Activated naive CD4-positive, alpha-beta T cell treated with anti-CD3 and anti-CD28 coated beads for 36 hours (primary cell): ENCODE measurements at regions of chr7 and their contacts with region 1.

Region 1: DNA sequence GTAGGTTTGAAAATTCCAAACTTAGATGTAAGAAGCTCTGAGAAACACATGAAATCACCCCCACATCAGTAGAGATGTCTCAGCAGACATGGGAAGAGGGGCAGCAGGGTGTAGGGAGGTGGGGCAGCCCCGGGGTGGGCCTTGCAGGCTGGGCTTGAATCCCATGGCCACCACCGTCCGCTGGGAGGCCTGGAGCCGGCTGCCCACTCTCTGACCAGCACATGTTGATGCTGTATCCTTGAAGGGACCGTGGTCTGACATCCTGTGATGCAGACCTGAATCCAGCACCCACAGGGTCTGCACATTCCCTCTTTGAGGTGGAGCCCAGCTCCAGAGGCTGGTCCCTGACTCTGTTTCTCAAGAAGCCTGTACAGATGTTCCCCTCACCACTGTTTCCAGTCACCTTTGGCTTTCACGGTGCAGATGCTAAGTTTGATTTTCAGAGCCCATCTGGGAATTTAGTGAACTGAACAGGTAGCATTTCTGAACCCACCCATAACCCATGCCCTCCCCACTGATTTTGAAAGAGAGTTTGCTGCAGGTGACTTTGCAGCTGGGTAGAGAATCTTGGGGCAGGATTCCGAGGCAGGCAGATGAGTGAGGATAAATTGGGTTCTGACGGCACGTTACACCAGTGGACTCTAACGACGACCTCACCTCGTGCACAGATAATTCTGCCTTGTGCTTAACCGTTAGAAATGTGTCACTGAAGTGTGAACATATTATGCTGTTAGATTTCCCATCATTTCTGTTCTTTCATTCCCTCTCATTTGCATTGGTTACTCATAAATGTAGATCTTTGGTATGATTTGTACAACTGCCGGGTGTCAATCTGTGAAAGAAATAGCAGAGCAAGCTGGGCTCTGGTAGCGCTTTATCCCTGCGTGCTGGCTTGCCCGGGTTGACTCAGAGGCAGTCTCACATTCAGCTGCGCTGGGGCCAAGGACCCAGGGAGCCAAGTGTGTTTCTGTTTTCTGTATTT is 45.7 kb downstream of the IKZF1 start:
- DNase-seq: peak; percentile 95
- H3K4me3 Mint-ChIP-seq: peak overlapping the region; percentile 33
- H3K27ac Mint-ChIP-seq: peak overlapping the region; percentile 95
- H3K4me1 Mint-ChIP-seq: peaks cover 97% of the 10 kb centered on the region
- H3K27me3 Mint-ChIP-seq: no peaks in the 10 kb centered on the region

Region 2: GRCh38 chr7:50147951-50148808 is 202.1 kb before region 1 on chr7:
- CTCF ChIA-PET with region 1: interaction called, 3 read pairs
- intact Hi-C with region 1: loop called (anchors 1 kb)
- DNase-seq: peak; percentile 73
- H3K4me3 Mint-ChIP-seq: peak overlapping the region; percentile 34
- H3K27ac Mint-ChIP-seq: peak overlapping the region; percentile 91
- H3K4me1 Mint-ChIP-seq: peaks cover 91% of the 10 kb centered on the region
- H3K27me3 Mint-ChIP-seq: no peaks in the 10 kb centered on the region

Region 3: GRCh38 chr7:50227726-50228125 is 122.5 kb before region 1 on chr7:
- CTCF ChIA-PET with region 1: interaction called, 5 read pairs
- intact Hi-C with region 1: loop called (anchors 1 kb)
- DNase-seq: no peak
- H3K4me3 Mint-ChIP-seq: peak overlapping the region; percentile 64
- H3K27ac Mint-ChIP-seq: peak overlapping the region; percentile 81
- H3K4me1 Mint-ChIP-seq: peaks cover 37% of the 10 kb centered on the region
- H3K27me3 Mint-ChIP-seq: no peaks in the 10 kb centered on the region

Region 4: DNA sequence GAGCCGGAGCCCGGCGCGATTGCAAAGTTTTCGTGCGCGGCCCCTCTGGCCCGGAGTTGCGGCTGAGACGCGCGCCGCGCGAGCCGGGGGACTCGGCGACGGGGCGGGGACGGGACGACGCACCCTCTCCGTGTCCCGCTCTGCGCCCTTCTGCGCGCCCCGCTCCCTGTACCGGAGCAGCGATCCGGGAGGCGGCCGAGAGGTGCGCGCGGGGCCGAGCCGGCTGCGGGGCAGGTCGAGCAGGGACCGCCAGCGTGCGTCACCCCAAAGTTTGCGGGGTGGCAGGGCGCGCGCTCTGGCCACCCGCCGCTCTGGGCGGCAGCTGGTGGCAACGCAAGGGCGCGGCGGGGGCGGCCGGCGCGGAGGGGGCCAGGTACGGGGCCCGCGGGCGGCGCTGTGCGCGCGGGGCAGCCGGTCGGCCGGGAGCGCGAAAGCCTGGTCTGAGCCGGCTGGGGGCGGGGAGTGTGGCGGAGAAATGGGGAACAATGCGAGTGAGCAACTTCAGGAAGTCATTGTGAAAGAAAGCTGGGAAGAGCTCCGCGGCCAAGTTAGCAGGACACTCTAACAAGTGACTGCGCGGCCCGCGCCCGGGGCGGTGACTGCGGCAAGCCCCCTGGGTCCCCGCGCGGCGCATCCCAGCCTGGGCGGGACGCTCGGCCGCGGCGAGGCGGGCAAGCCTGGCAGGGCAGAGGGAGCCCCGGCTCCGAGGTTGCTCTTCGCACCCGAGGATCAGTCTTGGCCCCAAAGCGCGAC is 45.9 kb before region 1 on chr7 and contains the start of gene IKZF1:
- CTCF ChIA-PET with region 1: interaction called, 21 read pairs
- intact Hi-C with region 1: loop called (anchors 1 kb)
- DNase-seq: peak; percentile 74
- H3K4me3 Mint-ChIP-seq: peak within 1 kb of the TSS; percentile 95
- H3K27ac Mint-ChIP-seq: peak within 1 kb of the TSS; percentile 99
- H3K4me1 Mint-ChIP-seq: peaks cover 34% of the 10 kb centered on the region
- H3K27me3 Mint-ChIP-seq: no peaks in the 10 kb centered on the region
- total RNA-seq, gene IKZF1: 213 to 226 TPM

Region 5: GRCh38 chr7:50335795-50336754 is 14.2 kb before region 1 on chr7:
- CTCF ChIA-PET with region 1: interaction called, 16 read pairs
- intact Hi-C with region 1: loop called (anchors 1 kb)
- DNase-seq: peak; percentile 91
- H3K4me3 Mint-ChIP-seq: no peak overlapping the region
- H3K27ac Mint-ChIP-seq: no peak overlapping the region
- H3K4me1 Mint-ChIP-seq: peaks cover 2% of the 10 kb centered on the region
- H3K27me3 Mint-ChIP-seq: no peaks in the 10 kb centered on the region

Region 6: GRCh38 chr7:50397320-50397970 is 47.2 kb after region 1 on chr7:
- CTCF ChIA-PET with region 1: no interaction called
- intact Hi-C with region 1: loop called (anchors 1 kb)
- DNase-seq: peak; percentile 60
- H3K4me3 Mint-ChIP-seq: no peak overlapping the region
- H3K27ac Mint-ChIP-seq: peak overlapping the region; percentile 78
- H3K4me1 Mint-ChIP-seq: peaks cover 81% of the 10 kb centered on the region
- H3K27me3 Mint-ChIP-seq: no peaks in the 10 kb centered on the region

Region 7: GRCh38 chr7:50455658-50456057 is 105.4 kb after region 1 on chr7:
- CTCF ChIA-PET with region 1: no interaction called
- intact Hi-C with region 1: no loop called
- DNase-seq: no peak
- H3K4me3 Mint-ChIP-seq: no peak overlapping the region
- H3K27ac Mint-ChIP-seq: no peak overlapping the region
- H3K4me1 Mint-ChIP-seq: peaks cover 9% of the 10 kb centered on the region
- H3K27me3 Mint-ChIP-seq: no peaks in the 10 kb centered on the region